ENCODE measurements at regions of chr1 and their contacts with region 1.

Region 1: DNA sequence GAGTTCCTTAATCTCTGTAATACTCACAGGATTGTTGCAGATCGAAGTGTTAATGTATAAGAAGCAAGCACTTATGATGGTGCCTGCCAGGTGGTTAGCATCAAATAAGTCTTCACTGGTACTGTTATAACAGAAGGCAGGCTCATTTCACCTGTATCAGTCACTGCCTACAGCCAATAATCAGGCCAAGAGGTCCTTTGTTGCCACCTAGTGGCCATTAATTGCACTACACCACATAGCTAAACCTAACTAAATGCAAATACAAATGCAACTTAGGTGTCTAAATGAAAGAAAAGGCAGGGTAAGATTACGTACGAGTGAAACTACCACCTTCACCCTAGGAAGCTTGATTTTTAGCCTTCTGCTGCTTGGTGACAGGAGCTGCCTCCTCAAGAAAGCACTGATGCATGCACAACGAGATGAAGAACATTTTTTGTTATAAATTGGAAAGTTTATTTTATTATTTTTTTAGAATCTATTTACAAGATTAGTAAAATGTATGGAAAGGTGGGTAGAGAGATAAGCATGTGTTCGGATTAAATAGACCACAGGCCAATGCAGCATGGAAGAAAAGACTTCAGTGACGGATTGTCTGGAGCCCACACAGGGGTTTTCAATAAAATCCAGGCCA is 334.8 kb upstream of the CAMK1G start:
- DNase-seq: peak; percentile 54
- ATAC-seq: peak; percentile 51
- H3K4me3 Mint-ChIP-seq: no peak overlapping the region
- H3K27ac Mint-ChIP-seq: no peak overlapping the region
- H3K4me1 Mint-ChIP-seq: no peaks in the 10 kb centered on the region
- H3K27me3 Mint-ChIP-seq: no peaks in the 10 kb centered on the region

Region 2: GRCh38 chr1:209260136-209260535 is 11.4 kb after region 1 on chr1:
- CTCF ChIA-PET with region 1: interaction called, 14 read pairs
- DNase-seq: no peak
- ATAC-seq: no peak
- H3K4me3 Mint-ChIP-seq: no peak overlapping the region
- H3K27ac Mint-ChIP-seq: no peak overlapping the region
- H3K4me1 Mint-ChIP-seq: no peaks in the 10 kb centered on the region
- H3K27me3 Mint-ChIP-seq: no peaks in the 10 kb centered on the region